PC-3 (cell line): ENCODE measurements at regions of chr3 and their contacts with region 1.

Region 1: DNA sequence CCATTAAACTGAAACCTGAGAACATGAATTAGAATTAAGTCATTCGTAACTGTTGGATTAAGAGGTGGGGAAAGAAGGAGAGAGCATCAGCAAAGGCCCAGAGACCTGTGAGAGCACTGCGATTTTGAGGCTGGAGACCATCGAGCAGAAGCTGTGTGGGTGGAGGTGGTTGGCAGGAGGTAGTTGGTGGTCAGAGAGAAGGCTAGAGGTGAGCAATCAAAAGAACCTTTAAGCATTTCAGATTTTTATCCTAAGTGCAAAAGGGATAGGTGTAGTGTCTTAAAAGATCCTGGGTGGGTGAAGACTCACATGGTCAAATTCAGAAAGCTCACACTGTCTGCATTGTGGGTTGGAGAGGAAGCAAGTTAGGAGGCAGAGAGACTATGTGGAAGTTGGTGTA is 65.1 kb upstream of the TEX264 start:
- DNase-seq: no peak
- ATAC-seq: no peak
- H3K4me3 ChIP-seq: no peak overlapping the region
- H3K27ac ChIP-seq: no peak overlapping the region
- H3K4me1 ChIP-seq: no peaks in the 10 kb centered on the region
- H3K27me3 ChIP-seq: no peaks in the 10 kb centered on the region
- CTCF ChIP-seq: no peak

Region 2: GRCh38 chr3:51568036-51568435 is 37.9 kb before region 1 on chr3:
- CTCF ChIA-PET with region 1: no interaction called
- POLR2A ChIA-PET with region 1: interaction called, 19 read pairs
- intact Hi-C with region 1: no loop called
- DNase-seq: no peak
- ATAC-seq: no peak
- H3K4me3 ChIP-seq: no peak overlapping the region
- H3K27ac ChIP-seq: no peak overlapping the region
- H3K4me1 ChIP-seq: no peaks in the 10 kb centered on the region
- H3K27me3 ChIP-seq: no peaks in the 10 kb centered on the region
- CTCF ChIP-seq: no peak

Region 3: GRCh38 chr3:51929420-51930003 is 323.6 kb after region 1 on chr3:
- CTCF ChIA-PET with region 1: no interaction called
- POLR2A ChIA-PET with region 1: no interaction called
- intact Hi-C with region 1: no loop called
- DNase-seq: peak; percentile 27
- ATAC-seq: peak; percentile 21; the same call in 1 of the 2 replicates
- H3K4me3 ChIP-seq: no peak overlapping the region
- H3K27ac ChIP-seq: no peak overlapping the region
- H3K4me1 ChIP-seq: no peaks in the 10 kb centered on the region
- H3K27me3 ChIP-seq: no peaks in the 10 kb centered on the region
- CTCF ChIP-seq: no peak